Activated CD4-positive, alpha-beta T cell treated with anti-CD3 and anti-CD28 coated beads for 36 hours (primary cell): ENCODE measurements at regions of chr6 and their contacts with region 1.

Region 1: GRCh38 chr6:127737009-127737486 is 160.1 kb downstream of the C6orf58 start:
- DNase-seq: peak; percentile 42
- ATAC-seq: peak; percentile 90
- H3K4me3 Mint-ChIP-seq: no peak overlapping the region
- H3K27ac Mint-ChIP-seq: peak overlapping the region; percentile 29
- H3K4me1 Mint-ChIP-seq: peaks cover 44% of the 10 kb centered on the region
- H3K27me3 Mint-ChIP-seq: no peaks in the 10 kb centered on the region

Region 2: DNA sequence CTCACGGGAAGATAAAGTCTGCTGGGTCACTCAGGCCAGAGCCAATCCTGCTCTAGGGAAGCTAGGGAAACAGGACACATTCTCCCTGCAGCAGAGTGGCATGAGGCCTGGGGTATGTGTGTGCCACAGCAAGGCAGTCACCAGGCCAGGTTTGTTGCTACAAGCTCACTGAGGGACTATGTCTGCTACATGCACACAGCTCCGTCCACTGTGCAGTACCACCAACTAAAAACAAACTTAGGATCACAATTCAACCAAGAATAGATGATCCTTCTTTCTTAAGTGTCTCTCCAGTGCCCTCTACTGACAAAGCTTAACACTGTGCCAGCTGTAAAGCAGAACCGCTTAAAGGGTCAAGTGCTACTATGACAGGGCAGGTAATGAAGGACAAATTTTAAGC is 590.8 kb after region 1 on chr6:
- CTCF ChIA-PET with region 1: interaction called, 22 read pairs
- POLR2A ChIA-PET with region 1: no interaction called
- intact Hi-C with region 1: loop called (anchors 1 kb)
- DNase-seq: peak; percentile 30
- ATAC-seq: peak; percentile 80
- H3K4me3 Mint-ChIP-seq: no peak overlapping the region
- H3K27ac Mint-ChIP-seq: no peak overlapping the region
- H3K4me1 Mint-ChIP-seq: no peaks in the 10 kb centered on the region
- H3K27me3 Mint-ChIP-seq: no peaks in the 10 kb centered on the region

Region 3: GRCh38 chr6:128725271-128726233 is 988.5 kb after region 1 on chr6:
- CTCF ChIA-PET with region 1: no interaction called
- POLR2A ChIA-PET with region 1: no interaction called
- intact Hi-C with region 1: loop called in 1 of 2 experiments (anchors 2 kb)
- DNase-seq: peak; percentile 40
- ATAC-seq: no peak
- H3K4me3 Mint-ChIP-seq: no peak overlapping the region
- H3K27ac Mint-ChIP-seq: no peak overlapping the region
- H3K4me1 Mint-ChIP-seq: no peaks in the 10 kb centered on the region
- H3K27me3 Mint-ChIP-seq: peaks cover 30% of the 10 kb centered on the region

Region 4: DNA sequence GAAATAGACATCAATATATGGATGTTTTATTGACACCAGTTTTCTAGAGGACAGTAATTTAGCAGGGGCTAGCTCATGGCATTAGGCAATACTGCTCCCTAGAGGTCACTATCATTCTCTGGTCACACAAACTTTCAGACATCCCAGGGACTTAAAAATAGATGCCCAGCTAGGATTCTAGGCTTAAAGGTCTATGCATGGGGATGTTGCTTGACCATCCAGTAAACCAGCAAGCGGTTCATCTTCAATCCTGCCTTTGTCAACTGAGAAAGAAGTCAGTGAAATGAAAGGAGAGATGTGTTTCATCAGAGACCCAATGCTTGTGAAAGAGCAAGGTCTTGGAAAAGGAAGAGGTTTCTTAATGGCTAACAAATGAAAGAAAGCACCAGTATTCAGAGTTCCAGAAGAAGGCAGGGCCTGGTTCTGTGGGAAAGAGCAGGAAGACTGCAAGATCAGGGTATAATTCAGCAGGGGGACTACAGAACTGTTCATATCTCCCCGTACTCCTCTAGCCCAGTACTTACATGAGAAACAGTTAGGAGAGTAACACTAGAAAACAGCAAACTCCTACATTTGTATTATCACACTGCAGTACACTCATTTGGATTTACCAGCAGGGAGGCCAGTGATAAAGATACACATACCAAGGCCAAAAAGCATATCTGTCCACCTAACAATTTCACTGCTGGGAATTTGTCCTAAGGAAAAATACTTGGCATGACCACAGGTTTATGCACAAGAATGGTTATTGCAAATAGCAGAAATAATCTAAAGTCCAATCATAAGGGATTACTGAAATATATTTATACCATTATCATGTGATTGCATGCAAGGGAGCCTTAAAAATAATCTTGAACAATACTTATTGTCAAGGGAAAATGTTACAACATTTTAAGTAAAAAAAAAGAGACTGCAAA is 994.5 kb after region 1 on chr6:
- CTCF ChIA-PET with region 1: no interaction called
- POLR2A ChIA-PET with region 1: no interaction called
- intact Hi-C with region 1: loop called (anchors 1 to 2 kb)
- DNase-seq: peak; percentile 5
- ATAC-seq: no peak
- H3K4me3 Mint-ChIP-seq: no peak overlapping the region
- H3K27ac Mint-ChIP-seq: no peak overlapping the region
- H3K4me1 Mint-ChIP-seq: no peaks in the 10 kb centered on the region
- H3K27me3 Mint-ChIP-seq: peaks cover 18% of the 10 kb centered on the region